ENCODE measurements at regions of chr19 and their contacts with region 1.

Region 1: DNA sequence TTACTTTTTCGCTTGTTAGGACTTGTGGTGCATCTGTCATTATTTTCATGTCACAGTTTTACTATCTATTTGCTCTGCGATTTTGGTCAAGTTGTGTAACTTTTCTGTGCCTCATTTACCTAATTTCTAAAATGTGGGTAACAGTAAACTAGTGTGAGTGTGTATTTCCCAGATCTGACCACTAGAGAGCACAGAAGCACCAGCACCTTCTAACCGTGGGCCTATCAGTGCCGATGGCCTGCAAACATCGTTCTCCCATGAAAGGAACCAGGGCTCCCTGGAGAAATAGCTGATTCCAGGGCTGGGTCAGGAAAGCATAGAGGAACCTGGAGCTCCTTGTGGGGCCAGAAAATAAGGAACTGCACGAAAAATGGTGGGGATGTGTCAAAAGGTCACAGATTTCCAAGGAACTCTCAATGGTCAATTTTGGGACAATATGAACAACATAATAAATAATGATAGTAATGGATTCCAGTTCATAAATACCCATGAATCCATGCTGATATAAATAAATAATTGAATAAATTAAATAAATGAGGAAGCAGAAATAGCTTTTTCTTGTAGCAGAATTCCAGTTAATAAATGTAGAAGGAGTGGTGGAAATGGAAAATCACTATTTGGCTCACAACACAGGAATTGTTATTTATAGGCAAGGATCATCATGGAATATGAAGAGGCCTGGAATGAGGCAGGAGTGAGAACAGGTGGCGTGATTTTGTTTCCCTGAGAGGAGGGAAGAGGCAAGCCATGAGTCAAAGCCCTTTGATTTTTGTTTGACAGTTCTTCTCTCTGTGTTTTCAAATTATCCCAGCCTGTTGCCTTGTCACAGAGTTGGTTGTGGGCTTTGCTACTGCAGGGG is 31.1 kb downstream of the CEACAM8 start:
- DNase-seq: peak; percentile 54
- ATAC-seq: peak; percentile 88
- H3K4me3 ChIP-seq: no peak overlapping the region
- H3K27ac ChIP-seq: no peak overlapping the region
- H3K4me1 ChIP-seq: no peaks in the 10 kb centered on the region
- H3K27me3 ChIP-seq: no peaks in the 10 kb centered on the region
- CTCF ChIP-seq: peak; percentile 58

Region 2: GRCh38 chr19:42553292-42554045 is 10.1 kb before region 1 on chr19:
- CTCF ChIA-PET with region 1: no interaction called
- POLR2A ChIA-PET with region 1: no interaction called
- intact Hi-C with region 1: no loop called
- DNase-seq: peak; percentile 38
- ATAC-seq: no peak
- H3K4me3 ChIP-seq: no peak overlapping the region
- H3K27ac ChIP-seq: no peak overlapping the region
- H3K4me1 ChIP-seq: no peaks in the 10 kb centered on the region
- H3K27me3 ChIP-seq: no peaks in the 10 kb centered on the region
- CTCF ChIP-seq: no peak

Region 3: DNA sequence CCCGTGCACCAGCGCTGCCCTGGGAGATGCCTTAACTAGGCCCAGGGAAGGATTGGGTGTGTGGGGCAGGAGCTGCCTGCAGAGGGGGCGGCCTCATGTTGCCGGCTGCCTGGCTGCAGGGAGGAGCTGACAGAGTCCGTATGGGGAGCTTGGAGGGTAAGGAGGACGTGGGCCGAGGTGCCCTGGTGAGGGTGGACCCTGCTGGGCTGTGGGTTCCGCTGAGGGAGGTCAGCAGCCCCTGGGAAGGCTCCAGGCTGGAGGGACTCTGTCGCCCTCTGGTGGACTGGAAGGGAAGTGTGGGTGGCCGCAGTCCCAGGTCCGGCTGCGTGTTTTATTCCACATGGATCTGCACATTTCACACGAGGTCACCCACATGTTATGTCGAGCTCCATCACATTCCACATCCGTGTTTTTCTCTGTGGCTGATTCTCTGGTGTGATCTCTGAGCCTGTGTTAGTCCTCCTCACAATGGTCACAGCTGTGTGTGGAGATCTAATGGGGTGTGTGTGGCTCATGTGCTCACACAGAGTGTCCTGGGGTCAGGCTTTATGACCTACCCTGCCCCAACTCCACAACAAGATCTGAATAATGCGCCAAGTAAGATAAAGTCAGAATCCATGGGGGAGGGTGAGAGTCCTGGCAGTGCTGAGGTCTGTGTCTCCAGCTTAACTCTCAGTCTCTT is 33.0 kb after region 1 on chr19:
- CTCF ChIA-PET with region 1: no interaction called
- POLR2A ChIA-PET with region 1: no interaction called
- intact Hi-C with region 1: loop called (anchors 2 kb)
- DNase-seq: peak; percentile 24
- ATAC-seq: peak; percentile 48
- H3K4me3 ChIP-seq: no peak overlapping the region
- H3K27ac ChIP-seq: no peak overlapping the region
- H3K4me1 ChIP-seq: no peaks in the 10 kb centered on the region
- H3K27me3 ChIP-seq: peaks cover under 1% of the 10 kb centered on the region; the same call in 1 of the 2 replicates
- CTCF ChIP-seq: peak; percentile 81

Measured in PC-3 (cell line).